ENCODE measurements at regions of chr9 and their contacts with region 1.

Region 1: DNA sequence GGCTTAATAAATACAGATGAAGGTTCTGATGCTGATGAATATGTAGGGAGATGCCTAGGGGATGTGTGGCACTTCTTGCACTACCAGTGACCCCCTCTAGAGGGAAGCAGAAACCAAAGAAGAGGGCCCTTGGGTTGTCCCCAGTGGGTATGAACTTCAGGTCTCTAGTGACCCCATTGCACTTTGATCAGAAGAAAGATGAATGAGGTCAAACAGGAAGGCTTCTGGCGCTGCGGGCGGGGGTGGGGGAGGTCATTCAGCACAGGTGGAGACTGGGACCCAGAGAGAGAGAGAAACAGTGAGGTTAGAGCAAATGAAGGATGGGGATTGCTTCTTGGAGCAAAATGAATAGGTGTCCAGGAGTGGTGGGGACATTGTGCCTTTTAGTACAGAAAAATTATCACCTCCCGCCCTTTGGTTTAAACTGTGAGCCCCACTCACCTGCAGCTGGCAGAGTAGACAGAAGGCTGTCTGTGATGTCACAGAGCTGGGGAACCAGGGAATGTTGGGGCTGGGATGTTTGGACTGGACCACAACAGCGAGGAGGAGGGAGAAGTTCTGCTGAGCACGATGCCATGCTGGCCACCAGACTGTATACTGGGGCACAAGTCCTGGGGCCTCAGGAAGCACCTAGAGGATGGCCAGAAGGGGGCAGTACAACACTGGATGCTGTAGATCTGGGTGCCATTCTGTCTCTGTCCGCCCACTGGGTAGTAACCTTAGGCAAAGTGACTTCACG is at the start of gene TEX48:
- DNase-seq: peak; percentile 48 to 89 (median 74)
- ATAC-seq: peak; percentile 89
- H3K4me3 ChIP-seq: no peak within 1 kb of the TSS
- H3K4me3 Mint-ChIP-seq: peak within 1 kb of the TSS; percentile 30
- H3K27ac ChIP-seq: no peak within 1 kb of the TSS
- H3K27ac Mint-ChIP-seq: peak within 1 kb of the TSS; percentile 25
- H3K4me1 ChIP-seq: peaks cover 5% of the 10 kb centered on the region
- H3K4me1 Mint-ChIP-seq: peaks cover 13% of the 10 kb centered on the region
- H3K27me3 ChIP-seq: peaks cover 0 to under 1% of the 10 kb centered on the region in 2 experiments
- H3K27me3 Mint-ChIP-seq: peaks cover 5% of the 10 kb centered on the region
- CTCF ChIP-seq: peak; percentile 58
- total RNA-seq, gene TEX48: not detected

Region 2: GRCh38 chr9:114551883-114552685 is 129.7 kb before region 1 on chr9:
- CTCF ChIA-PET with region 1: no interaction called
- POLR2A ChIA-PET with region 1: no interaction called
- intact Hi-C with region 1: no loop called
- DNase-seq: peak in 1 of 9 experiments; percentile 15
- ATAC-seq: no peak
- H3K4me3 ChIP-seq: no peak overlapping the region
- H3K4me3 Mint-ChIP-seq: no peak overlapping the region
- H3K27ac ChIP-seq: no peak overlapping the region
- H3K27ac Mint-ChIP-seq: no peak overlapping the region
- H3K4me1 ChIP-seq: no peaks in the 10 kb centered on the region
- H3K4me1 Mint-ChIP-seq: no peaks in the 10 kb centered on the region
- H3K27me3 ChIP-seq: peaks cover 0 to 3% of the 10 kb centered on the region in 2 experiments
- H3K27me3 Mint-ChIP-seq: peaks cover 10% of the 10 kb centered on the region
- CTCF ChIP-seq: no peak

Region 3: DNA sequence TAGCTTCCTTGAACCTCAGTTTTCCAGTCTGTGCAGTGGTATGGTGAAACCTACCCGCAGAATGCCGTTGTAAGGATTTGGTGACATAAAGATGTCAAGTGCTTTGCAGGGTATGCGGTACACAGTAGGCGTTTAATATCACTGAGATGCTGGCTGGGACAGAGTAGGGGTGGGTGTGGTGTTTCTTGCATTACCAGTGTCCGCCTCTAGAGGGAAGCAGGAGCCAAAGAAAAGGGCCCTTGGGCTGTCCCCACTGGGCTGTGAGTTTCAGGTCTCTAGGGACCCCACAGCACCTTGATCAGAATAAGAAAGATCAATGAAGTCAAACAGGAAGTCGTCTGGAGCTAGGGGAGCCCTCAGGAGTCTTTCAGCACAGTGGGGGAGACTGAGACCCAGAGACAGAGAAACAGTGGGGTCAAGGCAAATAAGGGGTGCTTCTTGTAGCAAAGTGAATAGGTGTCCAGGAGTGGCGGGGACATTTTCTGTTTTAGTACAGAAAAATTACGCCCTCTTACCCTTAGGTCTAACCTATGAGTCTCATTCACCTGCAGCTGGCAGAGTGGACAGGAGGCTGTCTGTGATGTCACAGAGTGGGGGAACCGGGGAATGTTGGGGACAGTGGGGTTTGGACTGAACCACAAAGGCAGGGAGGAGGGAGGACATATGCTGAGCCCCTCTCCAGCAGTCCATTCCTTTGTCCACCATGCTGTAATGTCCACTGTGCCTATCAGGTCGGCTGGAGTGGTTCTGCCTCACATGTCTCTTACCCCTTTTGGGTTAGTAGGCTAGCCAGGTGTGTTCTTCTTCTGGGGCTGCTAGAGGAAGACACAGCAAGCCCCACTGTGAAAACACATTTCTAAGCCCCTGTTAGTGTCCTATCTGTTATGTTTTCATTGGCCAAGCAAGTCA is 19.4 kb before region 1 on chr9:
- CTCF ChIA-PET with region 1: interaction called, 11 read pairs
- POLR2A ChIA-PET with region 1: no interaction called
- intact Hi-C with region 1: no loop called
- DNase-seq: peak; percentile 26 to 70 (median 62)
- ATAC-seq: peak; percentile 93
- H3K4me3 ChIP-seq: no peak overlapping the region
- H3K4me3 Mint-ChIP-seq: no peak overlapping the region
- H3K27ac ChIP-seq: no peak overlapping the region
- H3K27ac Mint-ChIP-seq: no peak overlapping the region
- H3K4me1 ChIP-seq: no peaks in the 10 kb centered on the region
- H3K4me1 Mint-ChIP-seq: no peaks in the 10 kb centered on the region
- H3K27me3 ChIP-seq: no peaks in the 10 kb centered on the region
- H3K27me3 Mint-ChIP-seq: peaks cover 2% of the 10 kb centered on the region
- CTCF ChIP-seq: peak; percentile 90

Region 4: GRCh38 chr9:114706711-114707110 is 24.9 kb after region 1 on chr9:
- CTCF ChIA-PET with region 1: interaction called, 17 read pairs
- POLR2A ChIA-PET with region 1: no interaction called
- intact Hi-C with region 1: no loop called
- DNase-seq: no peak
- ATAC-seq: no peak
- H3K4me3 ChIP-seq: no peak overlapping the region
- H3K4me3 Mint-ChIP-seq: no peak overlapping the region
- H3K27ac ChIP-seq: no peak overlapping the region
- H3K27ac Mint-ChIP-seq: no peak overlapping the region
- H3K4me1 ChIP-seq: no peaks in the 10 kb centered on the region
- H3K4me1 Mint-ChIP-seq: peaks cover 6% of the 10 kb centered on the region
- H3K27me3 ChIP-seq: no peaks in the 10 kb centered on the region
- H3K27me3 Mint-ChIP-seq: peaks cover 2% of the 10 kb centered on the region
- CTCF ChIP-seq: no peak

Region 5: DNA sequence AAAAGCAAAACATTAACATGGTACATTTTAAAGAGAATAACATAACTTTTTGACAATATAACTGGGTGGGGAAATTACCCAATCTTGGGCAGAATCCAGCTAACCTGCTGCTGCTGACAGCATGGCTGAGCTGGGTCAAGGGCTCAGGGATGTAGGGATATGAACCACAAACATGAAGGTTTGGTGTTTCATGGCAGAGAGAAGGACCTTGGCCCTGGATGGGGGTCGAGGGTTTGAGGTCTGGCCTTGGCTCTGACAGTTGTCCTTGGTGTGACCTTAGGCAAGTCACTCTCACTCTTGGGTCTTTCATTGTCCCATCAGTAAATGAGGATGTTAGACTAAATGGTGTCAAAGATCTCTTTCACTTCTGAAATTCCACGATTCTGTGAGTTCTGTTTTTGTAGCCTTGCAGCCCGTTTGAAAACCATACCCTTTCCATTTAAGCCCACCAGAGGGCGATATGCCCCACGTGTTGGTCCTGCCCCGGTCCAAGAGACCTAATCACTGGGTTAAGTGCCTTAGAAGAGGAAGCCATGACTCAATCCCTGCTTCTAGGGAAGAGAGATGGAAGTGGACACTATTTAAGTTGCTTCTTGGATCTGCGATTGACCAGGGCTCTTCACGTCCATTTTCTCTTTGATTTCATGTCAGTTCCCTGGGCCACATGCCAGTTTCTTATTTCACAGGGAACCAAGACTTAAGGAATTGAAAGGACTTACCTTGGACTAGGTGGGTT is 57.0 kb after region 1 on chr9:
- CTCF ChIA-PET with region 1: interaction called, 64 read pairs
- POLR2A ChIA-PET with region 1: interaction called, 3 read pairs
- intact Hi-C with region 1: loop called (anchors 1 to 2 kb)
- DNase-seq: peak; percentile 51 to 85 (median 74)
- ATAC-seq: peak; percentile 80
- H3K4me3 ChIP-seq: no peak overlapping the region
- H3K4me3 Mint-ChIP-seq: no peak overlapping the region
- H3K27ac ChIP-seq: no peak overlapping the region
- H3K27ac Mint-ChIP-seq: peak overlapping the region; percentile 47
- H3K4me1 ChIP-seq: peaks cover 25% of the 10 kb centered on the region
- H3K4me1 Mint-ChIP-seq: peaks cover 40% of the 10 kb centered on the region
- H3K27me3 ChIP-seq: no peaks in the 10 kb centered on the region
- H3K27me3 Mint-ChIP-seq: no peaks in the 10 kb centered on the region
- CTCF ChIP-seq: peak; percentile 92

Region 6: DNA sequence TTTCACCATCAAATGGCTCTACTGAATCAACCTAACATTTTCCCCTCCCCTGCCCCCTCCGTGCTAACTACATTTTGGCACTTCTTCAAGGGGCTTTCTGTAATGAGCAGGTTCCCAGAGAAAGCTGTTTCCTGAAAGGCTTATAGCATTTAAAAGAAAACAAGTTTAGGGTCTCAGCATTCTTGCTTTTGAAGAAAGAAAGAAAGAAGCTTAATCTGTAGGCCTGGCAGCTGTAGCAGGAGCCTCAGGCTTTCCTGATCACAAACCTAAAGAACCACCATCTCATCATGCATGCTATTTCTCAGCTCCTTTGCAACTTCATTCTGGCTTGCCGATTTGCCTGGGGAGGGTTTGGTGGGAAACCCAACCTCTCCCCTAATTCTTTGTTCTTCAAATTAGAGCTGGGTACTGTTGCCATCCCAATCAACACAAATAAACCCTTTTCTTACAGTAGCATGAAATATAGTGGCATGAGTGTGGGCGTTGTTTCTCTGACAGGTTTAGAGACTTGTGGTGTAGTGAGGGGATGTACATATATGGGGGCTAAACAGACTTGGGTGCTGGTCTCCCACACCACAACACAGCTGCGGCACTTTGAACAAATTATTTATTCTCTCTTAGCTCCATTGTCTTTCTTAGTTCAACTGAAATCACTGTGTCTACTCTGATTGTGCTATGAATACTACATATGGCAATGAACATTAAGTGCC is 596.7 kb after region 1 on chr9:
- CTCF ChIA-PET with region 1: no interaction called
- POLR2A ChIA-PET with region 1: no interaction called
- intact Hi-C with region 1: no loop called
- DNase-seq: no peak
- ATAC-seq: no peak
- H3K4me3 ChIP-seq: no peak overlapping the region
- H3K4me3 Mint-ChIP-seq: no peak overlapping the region
- H3K27ac ChIP-seq: no peak overlapping the region
- H3K27ac Mint-ChIP-seq: no peak overlapping the region
- H3K4me1 ChIP-seq: no peaks in the 10 kb centered on the region
- H3K4me1 Mint-ChIP-seq: no peaks in the 10 kb centered on the region
- H3K27me3 ChIP-seq: no peaks in the 10 kb centered on the region
- H3K27me3 Mint-ChIP-seq: peaks cover 4% of the 10 kb centered on the region
- CTCF ChIP-seq: no peak

Region 7: GRCh38 chr9:115524453-115525059 is 842.8 kb after region 1 on chr9:
- CTCF ChIA-PET with region 1: interaction called, 3 read pairs
- POLR2A ChIA-PET with region 1: no interaction called
- intact Hi-C with region 1: loop called in 1 of 2 experiments (anchors 1 kb)
- DNase-seq: peak in 2 of 9 experiments; percentile 30 to 39
- ATAC-seq: no peak
- H3K4me3 ChIP-seq: no peak overlapping the region
- H3K4me3 Mint-ChIP-seq: no peak overlapping the region
- H3K27ac ChIP-seq: no peak overlapping the region
- H3K27ac Mint-ChIP-seq: no peak overlapping the region
- H3K4me1 ChIP-seq: no peaks in the 10 kb centered on the region
- H3K4me1 Mint-ChIP-seq: no peaks in the 10 kb centered on the region
- H3K27me3 ChIP-seq: no peaks in the 10 kb centered on the region
- H3K27me3 Mint-ChIP-seq: peaks cover 22% of the 10 kb centered on the region
- CTCF ChIP-seq: peak; percentile 40

Measured in CD8-positive, alpha-beta T cell (primary cell).